Pancreas (tissue), 10 donors: ENCODE measurements at regions of chr3 and their contacts with region 1.

Region 1: DNA sequence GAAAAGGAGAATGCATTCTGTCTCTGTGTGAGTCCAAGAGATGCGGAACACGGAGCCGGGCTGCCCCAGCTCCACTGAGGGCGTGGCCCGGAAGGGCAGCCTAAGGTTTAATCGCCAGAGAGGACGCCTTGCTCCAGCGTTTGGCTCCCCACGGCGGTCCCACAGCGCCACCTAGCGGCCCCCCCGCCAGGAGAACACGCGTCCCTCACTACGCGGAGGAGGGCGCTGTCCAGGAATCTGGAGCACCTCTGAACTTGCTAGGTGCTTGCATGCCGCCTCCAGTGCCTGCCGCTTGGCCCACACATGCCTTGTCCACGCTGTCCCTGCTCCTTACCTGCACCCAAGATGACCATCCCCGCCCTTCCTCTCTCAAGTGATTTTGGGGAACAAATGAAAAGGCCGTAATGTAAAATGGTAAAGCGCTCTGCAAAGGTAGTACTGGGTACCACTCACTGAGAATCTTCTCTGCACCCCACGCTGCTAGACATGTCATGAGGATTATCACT is 14.4 kb upstream of the MRPS22 start:
- DNase-seq: peak; percentile 82 to 100 (median 94)
- ATAC-seq: peak; percentile 99
- H3K4me3 ChIP-seq: no peak overlapping the region
- H3K27ac ChIP-seq: no peak overlapping the region
- H3K4me1 ChIP-seq: no peaks in the 10 kb centered on the region
- H3K27me3 ChIP-seq: no peaks in the 10 kb centered on the region
- CTCF ChIP-seq: peak; percentile 99

Region 2: DNA sequence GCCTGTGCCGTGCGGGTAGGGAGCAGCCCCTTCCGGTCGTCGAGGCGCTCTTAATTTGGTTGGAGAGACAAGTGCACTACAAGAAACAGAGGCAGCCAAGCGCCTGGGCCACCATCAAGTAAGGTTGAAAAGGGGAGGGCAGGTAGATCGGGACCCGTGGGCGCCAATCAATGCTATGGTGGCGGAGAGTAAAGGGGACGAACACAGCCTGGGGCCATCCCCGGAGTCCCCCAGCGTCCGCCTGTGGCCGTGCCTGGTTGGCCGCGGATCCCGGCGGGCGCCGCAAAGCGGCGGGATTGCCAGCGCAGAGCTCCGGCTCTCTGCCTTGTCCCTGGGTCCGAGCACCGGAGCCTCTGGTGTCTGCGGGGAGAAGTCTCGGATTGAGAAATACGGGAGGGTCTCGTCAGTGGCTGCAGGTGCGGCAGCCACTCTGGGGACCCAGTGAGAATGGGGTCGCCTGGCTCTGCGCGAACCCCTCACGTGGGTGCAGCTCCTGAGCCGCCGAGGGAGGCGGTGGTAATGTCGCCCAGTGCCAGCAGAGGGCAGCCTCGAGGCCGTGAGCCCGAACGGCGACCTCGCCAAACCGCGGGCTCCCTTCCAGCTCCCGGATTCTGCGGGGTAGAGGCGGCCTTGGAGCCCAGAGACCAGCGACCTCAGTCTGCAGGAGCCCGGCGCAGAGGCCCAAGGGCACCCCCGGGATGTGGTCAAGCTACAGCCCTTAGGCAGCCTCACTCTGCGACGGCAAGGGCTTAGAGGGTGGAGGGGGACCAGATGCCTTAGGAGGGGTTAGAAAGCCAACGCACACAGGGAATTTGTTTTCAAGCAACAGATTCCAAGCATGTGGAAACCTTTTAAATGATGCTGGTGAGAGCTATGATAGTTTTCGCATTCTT is 393.3 kb before region 1 on chr3:
- intact Hi-C with region 1: loop called in 2 of 3 experiments (anchors 10 kb)
- DNase-seq: peak; percentile 68 to 95 (median 86)
- ATAC-seq: peak; percentile 76 to 95 (median 93)
- H3K4me3 ChIP-seq: peak overlapping the region in 3 of 4 donors; percentile 10 to 42 (median 24)
- H3K27ac ChIP-seq: no peak overlapping the region
- H3K4me1 ChIP-seq: peaks cover 0 to 20% (median 6%) of the 10 kb centered on the region in 3 donors
- H3K27me3 ChIP-seq: peaks cover 5 to 47% (median 21%) of the 10 kb centered on the region in 4 donors
- CTCF ChIP-seq: peak; percentile 91 to 97 (median 93)

Region 3: GRCh38 chr3:138941259-138941885 is 388.0 kb before region 1 on chr3:
- intact Hi-C with region 1: loop called in 2 of 3 experiments (anchors 10 kb)
- DNase-seq: peak in 3 of 6 donors; percentile 28 to 78 (median 58)
- ATAC-seq: peak in 2 of 4 donors; percentile 24 to 25
- H3K4me3 ChIP-seq: no peak overlapping the region
- H3K27ac ChIP-seq: no peak overlapping the region
- H3K4me1 ChIP-seq: peaks cover 4 to 22% (median 7%) of the 10 kb centered on the region in 3 donors
- H3K27me3 ChIP-seq: peaks cover 9 to 68% (median 26%) of the 10 kb centered on the region in 4 donors
- CTCF ChIP-seq: peak in 3 of 4 donors; percentile 8 to 31 (median 17)

Region 4: GRCh38 chr3:139111392-139112229 is 217.8 kb before region 1 on chr3:
- intact Hi-C with region 1: loop called (anchors 5 to 10 kb)
- DNase-seq: peak in 5 of 6 donors; percentile 51 to 83 (median 75)
- ATAC-seq: peak; percentile 80 to 96 (median 92)
- H3K4me3 ChIP-seq: no peak overlapping the region
- H3K27ac ChIP-seq: no peak overlapping the region
- H3K4me1 ChIP-seq: peaks cover under 1 to 2% (median 1%) of the 10 kb centered on the region in 3 donors
- H3K27me3 ChIP-seq: no peaks in the 10 kb centered on the region
- CTCF ChIP-seq: peak; percentile 58 to 72 (median 63)